ENCODE measurements at regions of chr1 and their contacts with region 1.

Region 1: GRCh38 chr1:156625436-156626078 is 6.3 kb downstream of the HAPLN2 start:
- DNase-seq: peak; percentile 61
- H3K4me3 Mint-ChIP-seq: peak overlapping the region; percentile 35
- H3K27ac Mint-ChIP-seq: no peak overlapping the region
- H3K4me1 Mint-ChIP-seq: peaks cover 12% of the 10 kb centered on the region
- H3K27me3 Mint-ChIP-seq: peaks cover 61% of the 10 kb centered on the region
- CTCF ChIP-seq: peak; percentile 91

Region 2: GRCh38 chr1:156641761-156642264 is 16.3 kb after region 1 on chr1 and contains the start of gene BCAN:
- CTCF ChIA-PET with region 1: interaction called, 154 read pairs
- POLR2A ChIA-PET with region 1: interaction called, 5 read pairs
- intact Hi-C with region 1: no loop called
- DNase-seq: no peak
- H3K4me3 Mint-ChIP-seq: no peak within 1 kb of the TSS
- H3K27ac Mint-ChIP-seq: no peak within 1 kb of the TSS
- H3K4me1 Mint-ChIP-seq: peaks cover 15% of the 10 kb centered on the region
- H3K27me3 Mint-ChIP-seq: peaks cover 36% of the 10 kb centered on the region
- CTCF ChIP-seq: no peak
- total RNA-seq, gene BCAN: 0.37 TPM in 1 of 2 replicates, not detected in the other

Region 3: GRCh38 chr1:156677616-156678596 is 52.3 kb after region 1 on chr1:
- CTCF ChIA-PET with region 1: interaction called, 91 read pairs
- POLR2A ChIA-PET with region 1: interaction called, 3 read pairs
- intact Hi-C with region 1: loop called (anchors 1 kb)
- DNase-seq: peak; percentile 87
- H3K4me3 Mint-ChIP-seq: no peak overlapping the region
- H3K27ac Mint-ChIP-seq: no peak overlapping the region
- H3K4me1 Mint-ChIP-seq: peaks cover 6% of the 10 kb centered on the region
- H3K27me3 Mint-ChIP-seq: peaks cover 46% of the 10 kb centered on the region
- CTCF ChIP-seq: peak; percentile 91

Region 4: GRCh38 chr1:156705918-156706656 is 80.5 kb after region 1 on chr1:
- CTCF ChIA-PET with region 1: interaction called, 10 read pairs
- POLR2A ChIA-PET with region 1: no interaction called
- intact Hi-C with region 1: no loop called
- DNase-seq: peak; percentile 57
- H3K4me3 Mint-ChIP-seq: peak overlapping the region; percentile 30
- H3K27ac Mint-ChIP-seq: no peak overlapping the region
- H3K4me1 Mint-ChIP-seq: peaks cover 38% of the 10 kb centered on the region
- H3K27me3 Mint-ChIP-seq: no peaks in the 10 kb centered on the region
- CTCF ChIP-seq: peak; percentile 99

Measured in MCF 10A (cell line).